H1 (cell line): ENCODE measurements at regions of chr5 and their contacts with region 1.

Region 1: DNA sequence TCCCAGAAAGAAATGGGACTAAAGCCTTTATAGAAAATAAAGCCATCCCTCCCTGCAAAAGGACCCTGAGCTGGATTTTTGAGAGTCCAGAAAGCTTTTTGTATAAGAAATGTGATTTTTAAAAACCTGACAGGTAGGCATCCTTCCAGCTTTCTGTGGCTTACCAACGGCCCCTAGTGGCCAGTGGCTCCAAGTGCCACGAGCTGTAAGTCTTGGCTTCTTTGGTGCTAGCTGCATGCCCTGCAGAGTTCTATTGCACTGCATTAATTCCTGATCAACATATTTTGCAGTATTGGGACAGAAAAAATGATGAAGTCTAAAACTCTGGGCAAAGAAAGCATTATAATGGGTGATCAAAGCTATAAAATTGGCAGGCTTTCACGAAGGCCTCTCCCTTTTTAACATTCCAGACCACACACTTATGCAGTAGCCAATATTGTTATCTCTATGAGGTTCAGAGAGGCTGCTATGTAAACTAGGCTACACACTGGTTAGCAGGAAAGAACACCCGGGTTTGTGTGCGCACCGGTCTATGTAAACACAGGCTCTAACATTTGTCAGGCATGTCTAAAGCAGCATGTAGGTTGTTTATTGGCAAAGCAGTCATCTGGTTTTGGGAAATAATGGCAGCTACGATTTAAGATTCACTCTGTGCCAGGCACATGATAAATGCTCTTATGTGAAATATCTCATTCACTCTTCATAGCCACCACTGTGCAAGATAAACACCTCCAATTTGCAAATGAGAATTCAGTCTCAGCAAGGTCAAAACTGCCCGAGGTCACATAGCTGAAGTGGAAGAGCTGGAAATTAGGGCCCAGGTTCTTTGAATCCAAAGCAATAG is 55.2 kb downstream of the NMUR2 start:
- DNase-seq: peak; percentile 17 to 70
- H3K4me3 ChIP-seq: no peak overlapping the region
- H3K27ac ChIP-seq: no peak overlapping the region
- H3K4me1 ChIP-seq: no peaks in the 10 kb centered on the region
- H3K27me3 ChIP-seq: peaks cover 0 to 1% (median 0%) of the 10 kb centered on the region in 4 experiments; a peak in 1 of 7 replicates
- CTCF ChIP-seq: peak; percentile 82 to 90 (median 89)
- EP300 ChIP-seq: no peak
- POLR2A ChIP-seq: no peak
- RAD21 ChIP-seq: peak; percentile 90 to 93

Region 2: DNA sequence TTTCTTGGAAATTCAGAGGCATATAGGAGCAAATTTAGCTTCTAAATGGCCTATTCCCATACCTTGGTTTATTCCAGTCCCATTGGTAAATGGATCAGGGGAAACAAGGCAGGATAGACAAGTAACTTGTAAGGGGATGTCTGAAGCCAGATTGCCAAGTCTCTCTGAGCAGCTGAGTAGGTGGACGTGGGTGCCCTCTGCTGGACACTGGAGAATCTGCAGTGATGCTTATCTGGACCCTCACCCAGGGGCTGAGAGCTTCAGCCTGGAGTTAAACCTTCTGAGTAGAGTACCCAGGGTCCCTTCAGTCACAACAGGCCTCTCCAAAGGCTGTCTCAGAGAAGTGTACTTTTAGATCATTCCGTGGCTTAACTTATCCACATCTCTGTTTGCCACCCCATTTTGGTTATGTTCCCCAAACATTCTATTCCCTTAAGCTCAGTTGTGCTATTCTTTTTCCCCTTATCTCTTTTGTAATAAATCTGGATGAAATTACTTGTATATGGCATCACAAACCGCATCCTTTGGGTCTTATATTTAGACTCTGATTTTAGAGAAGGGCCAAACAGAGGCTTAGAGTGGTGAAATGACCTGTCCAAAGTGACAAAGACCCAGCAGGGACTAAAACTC is 206.9 kb before region 1 on chr5:
- CTCF ChIA-PET with region 1: interaction called, 46 read pairs
- POLR2A ChIA-PET with region 1: interaction called, 3 read pairs
- DNase-seq: peak; percentile 61 to 86
- H3K4me3 ChIP-seq: no peak overlapping the region
- H3K27ac ChIP-seq: no peak overlapping the region
- H3K4me1 ChIP-seq: no peaks in the 10 kb centered on the region; a peak in 1 of 7 replicates
- H3K27me3 ChIP-seq: no peaks in the 10 kb centered on the region
- CTCF ChIP-seq: peak; percentile 89 to 93 (median 90)
- EP300 ChIP-seq: no peak
- POLR2A ChIP-seq: no peak
- RAD21 ChIP-seq: peak; percentile 97 to 98

Region 3: GRCh38 chr5:152309926-152310450 is 39.9 kb before region 1 on chr5:
- CTCF ChIA-PET with region 1: interaction called, 33 read pairs
- POLR2A ChIA-PET with region 1: no interaction called
- DNase-seq: no peak
- H3K4me3 ChIP-seq: no peak overlapping the region
- H3K27ac ChIP-seq: no peak overlapping the region
- H3K4me1 ChIP-seq: no peaks in the 10 kb centered on the region
- H3K27me3 ChIP-seq: no peaks in the 10 kb centered on the region
- CTCF ChIP-seq: no peak
- EP300 ChIP-seq: no peak
- POLR2A ChIP-seq: no peak
- RAD21 ChIP-seq: no peak

Region 4: GRCh38 chr5:152335461-152335860 is 14.4 kb before region 1 on chr5:
- CTCF ChIA-PET with region 1: interaction called, 38 read pairs
- POLR2A ChIA-PET with region 1: no interaction called
- DNase-seq: no peak
- H3K4me3 ChIP-seq: no peak overlapping the region
- H3K27ac ChIP-seq: no peak overlapping the region
- H3K4me1 ChIP-seq: no peaks in the 10 kb centered on the region
- H3K27me3 ChIP-seq: no peaks in the 10 kb centered on the region
- CTCF ChIP-seq: no peak
- EP300 ChIP-seq: no peak
- POLR2A ChIP-seq: no peak
- RAD21 ChIP-seq: no peak

Region 5: DNA sequence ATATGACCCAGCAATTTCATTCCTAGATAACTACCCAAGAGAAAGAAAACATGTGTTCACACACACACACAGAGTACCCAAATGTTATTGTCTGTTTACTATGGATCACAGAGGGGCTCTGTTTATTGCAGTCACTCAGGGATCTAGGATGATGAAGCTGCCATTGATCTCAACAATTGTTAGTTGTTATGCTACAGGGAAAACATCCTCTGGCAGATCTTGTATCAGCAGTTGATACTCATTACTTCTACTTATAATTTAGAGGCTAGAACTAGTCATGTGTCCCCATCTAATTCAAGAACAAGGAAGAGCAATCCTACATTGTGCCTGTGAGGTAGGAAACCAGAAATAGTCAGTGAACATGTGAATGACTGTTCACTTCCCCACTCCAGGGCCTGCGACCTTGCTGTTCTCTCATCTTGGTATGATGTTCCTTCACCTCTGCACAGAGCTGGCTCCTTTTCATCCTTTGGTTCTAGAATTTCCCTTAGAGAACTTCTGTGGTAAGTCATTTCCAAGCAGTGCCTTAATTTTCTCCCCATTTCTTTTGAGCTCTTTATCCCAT is 24.9 kb after region 1 on chr5:
- CTCF ChIA-PET with region 1: interaction called, 10 read pairs
- POLR2A ChIA-PET with region 1: no interaction called
- DNase-seq: no peak
- H3K4me3 ChIP-seq: no peak overlapping the region
- H3K27ac ChIP-seq: no peak overlapping the region
- H3K4me1 ChIP-seq: no peaks in the 10 kb centered on the region
- H3K27me3 ChIP-seq: no peaks in the 10 kb centered on the region
- CTCF ChIP-seq: no peak
- EP300 ChIP-seq: no peak
- POLR2A ChIP-seq: no peak
- RAD21 ChIP-seq: no peak

Region 6: GRCh38 chr5:152505442-152506042 is 155.6 kb after region 1 on chr5:
- CTCF ChIA-PET with region 1: interaction called, 22 read pairs
- POLR2A ChIA-PET with region 1: no interaction called
- DNase-seq: peak in 1 of 2 experiments; percentile 64
- H3K4me3 ChIP-seq: no peak overlapping the region
- H3K27ac ChIP-seq: no peak overlapping the region
- H3K4me1 ChIP-seq: no peaks in the 10 kb centered on the region
- H3K27me3 ChIP-seq: no peaks in the 10 kb centered on the region
- CTCF ChIP-seq: peak in 2 of 3 experiments; percentile 59 to 72; a peak in 2 of 4 replicates
- EP300 ChIP-seq: no peak
- POLR2A ChIP-seq: no peak
- RAD21 ChIP-seq: peak; percentile 81 to 84